ENCODE measurements at regions of chr10 and their contacts with region 1.

Region 1: GRCh38 chr10:104274762-104275721 is 6.1 kb downstream of the GSTO2 start:
- DNase-seq: peak; percentile 51 to 65 (median 58)
- H3K4me3 ChIP-seq: peak overlapping the region in 6 of 7 experiments; percentile 35 to 75 (median 50)
- H3K27ac ChIP-seq: no peak overlapping the region
- H3K4me1 ChIP-seq: peaks cover 0 to 20% (median 9%) of the 10 kb centered on the region in 4 experiments
- H3K27me3 ChIP-seq: no peaks in the 10 kb centered on the region

Region 2: DNA sequence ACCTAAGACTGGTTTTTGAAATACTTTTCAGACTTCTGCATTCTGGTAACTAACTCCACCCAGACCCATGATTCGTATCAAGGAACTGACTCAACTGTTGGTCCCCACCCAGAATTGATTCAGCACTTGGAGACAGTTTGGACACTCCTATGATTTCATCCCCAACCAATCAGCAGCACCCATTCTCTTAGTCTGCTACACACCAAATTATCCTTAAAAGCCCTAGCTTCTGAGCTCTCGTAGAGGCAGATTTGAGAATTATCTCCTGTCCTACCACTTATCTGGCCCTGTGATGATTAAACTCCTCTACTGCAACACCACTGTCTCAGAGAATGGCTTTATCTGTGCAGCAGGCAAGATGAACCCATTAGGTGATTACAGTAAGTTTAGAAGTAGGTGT is 28.1 kb before region 1 on chr10:
- CTCF ChIA-PET with region 1: interaction called, 11 read pairs
- POLR2A ChIA-PET with region 1: no interaction called
- DNase-seq: peak; percentile 66 to 90 (median 83)
- H3K4me3 ChIP-seq: peak overlapping the region in 3 of 7 experiments; percentile 13 to 46 (median 42)
- H3K27ac ChIP-seq: peak overlapping the region; percentile 19 to 82
- H3K4me1 ChIP-seq: peaks cover 14 to 39% (median 25%) of the 10 kb centered on the region in 4 experiments
- H3K27me3 ChIP-seq: no peaks in the 10 kb centered on the region

Region 3: GRCh38 chr10:104260775-104261115 is 14.3 kb before region 1 on chr10:
- CTCF ChIA-PET with region 1: interaction called, 37 read pairs
- POLR2A ChIA-PET with region 1: interaction called, 13 read pairs
- DNase-seq: peak in 2 of 3 donors; percentile 67 to 78
- H3K4me3 ChIP-seq: peak overlapping the region in 1 of 7 experiments; percentile 10
- H3K27ac ChIP-seq: peak overlapping the region; percentile 33 to 68
- H3K4me1 ChIP-seq: peaks cover 7 to 37% (median 20%) of the 10 kb centered on the region in 4 experiments
- H3K27me3 ChIP-seq: no peaks in the 10 kb centered on the region

Region 4: GRCh38 chr10:104308439-104308903 is 33.4 kb after region 1 on chr10:
- CTCF ChIA-PET with region 1: interaction called, 13 read pairs
- POLR2A ChIA-PET with region 1: no interaction called
- DNase-seq: no peak
- H3K4me3 ChIP-seq: no peak overlapping the region
- H3K27ac ChIP-seq: no peak overlapping the region
- H3K4me1 ChIP-seq: peaks cover 9 to 27% (median 20%) of the 10 kb centered on the region in 4 experiments
- H3K27me3 ChIP-seq: no peaks in the 10 kb centered on the region

Region 5: GRCh38 chr10:104337974-104338735 is 63.1 kb after region 1 on chr10 and contains the start of gene ITPRIP:
- CTCF ChIA-PET with region 1: interaction called, 14 read pairs
- POLR2A ChIA-PET with region 1: no interaction called
- DNase-seq: peak; percentile 72 to 88 (median 81)
- H3K4me3 ChIP-seq: peak within 1 kb of the TSS; percentile 85 to 98 (median 91)
- H3K27ac ChIP-seq: peak within 1 kb of the TSS; percentile 86 to 96
- H3K4me1 ChIP-seq: peaks cover 21 to 47% (median 42%) of the 10 kb centered on the region in 4 experiments
- H3K27me3 ChIP-seq: no peaks in the 10 kb centered on the region

Region 6: GRCh38 chr10:105718207-105718995 is 1443.4 kb after region 1 on chr10:
- CTCF ChIA-PET with region 1: no interaction called
- POLR2A ChIA-PET with region 1: no interaction called
- DNase-seq: no peak
- H3K4me3 ChIP-seq: no peak overlapping the region
- H3K27ac ChIP-seq: no peak overlapping the region
- H3K4me1 ChIP-seq: no peaks in the 10 kb centered on the region
- H3K27me3 ChIP-seq: no peaks in the 10 kb centered on the region

Measured in common myeloid progenitor, CD34-positive (primary cell).